ENCODE measurements at regions of chr21 and their contacts with region 1.

Region 1: DNA sequence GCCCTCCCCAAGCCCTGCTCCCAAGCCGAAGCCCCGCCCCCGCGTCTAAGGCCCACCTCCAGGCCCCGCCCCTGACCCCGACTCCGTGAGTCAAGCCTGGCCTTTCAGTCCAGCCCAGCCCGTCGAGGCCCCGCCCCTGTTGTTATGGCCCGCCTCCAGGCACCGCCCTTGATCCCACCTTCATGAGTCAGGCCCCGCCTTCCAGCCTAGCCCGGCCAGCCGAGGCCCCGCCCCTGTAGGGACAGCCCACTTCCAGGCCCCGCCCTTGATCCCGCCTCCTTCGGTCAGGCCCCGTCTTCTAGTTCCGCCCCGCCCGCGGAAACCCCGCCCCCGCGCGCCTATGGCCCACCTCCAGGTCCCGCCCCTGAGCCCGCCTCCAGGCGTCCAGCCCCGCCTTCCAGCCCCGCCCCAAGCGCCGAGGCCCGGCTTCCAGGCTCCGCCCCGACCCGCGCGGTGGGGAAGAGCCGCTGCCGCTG is 247 bp upstream of the DOP1B start:
- DNase-seq: peak; percentile 100
- H3K4me3 Mint-ChIP-seq: peak overlapping the region; percentile 80
- H3K27ac Mint-ChIP-seq: no peak overlapping the region
- H3K4me1 Mint-ChIP-seq: peaks cover 13% of the 10 kb centered on the region
- H3K27me3 Mint-ChIP-seq: no peaks in the 10 kb centered on the region

Region 2: DNA sequence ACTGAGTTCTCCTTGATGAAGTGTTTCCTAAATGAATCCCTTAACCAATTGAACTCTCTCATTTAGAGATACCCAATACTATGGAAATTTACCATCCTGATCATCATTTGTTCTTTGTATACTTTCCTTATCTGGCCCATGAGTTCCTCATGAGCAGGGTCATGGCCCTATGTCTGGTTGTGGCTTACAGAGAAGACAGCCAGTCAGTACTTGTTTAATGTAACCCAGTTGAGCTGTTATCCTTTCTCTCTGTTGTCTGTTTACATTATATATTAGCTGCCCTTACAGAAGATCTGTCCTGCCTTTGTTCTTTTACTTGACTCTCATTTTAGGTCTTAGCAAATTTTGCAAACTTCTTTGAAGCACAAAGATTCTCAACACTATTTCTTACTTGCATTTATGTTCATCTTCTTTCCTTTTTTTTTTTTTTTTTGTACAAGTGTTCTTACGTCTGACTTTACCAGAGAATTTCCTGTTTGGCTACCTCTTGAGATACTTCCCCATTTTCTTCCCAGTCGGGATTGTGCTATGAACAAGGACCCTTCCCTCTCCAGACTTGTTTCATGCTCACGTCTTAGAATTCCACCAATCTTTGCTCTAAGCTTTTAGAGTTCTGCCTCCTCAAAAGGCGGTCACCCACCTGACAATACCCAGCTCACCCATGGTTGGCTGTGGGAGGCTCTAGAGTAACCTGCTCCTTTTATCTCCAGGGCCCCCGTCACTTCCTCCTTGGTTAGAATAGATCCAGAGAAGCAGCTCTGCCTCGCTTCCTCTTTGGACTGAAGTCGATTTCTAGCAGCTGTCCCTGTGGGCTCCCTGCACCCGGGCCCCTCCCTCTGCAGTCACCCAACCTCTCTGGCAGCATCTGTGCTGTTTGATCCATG is 1053.6 kb before region 1 on chr21:
- CTCF ChIA-PET with region 1: no interaction called
- intact Hi-C with region 1: no loop called
- DNase-seq: peak; percentile 70
- H3K4me3 Mint-ChIP-seq: no peak overlapping the region
- H3K27ac Mint-ChIP-seq: no peak overlapping the region
- H3K4me1 Mint-ChIP-seq: peaks cover 4% of the 10 kb centered on the region
- H3K27me3 Mint-ChIP-seq: no peaks in the 10 kb centered on the region

Region 3: GRCh38 chr21:36060159-36060921 is 96.0 kb before region 1 on chr21 and contains the start of gene SETD4:
- CTCF ChIA-PET with region 1: no interaction called
- intact Hi-C with region 1: loop called (anchors 1 kb)
- DNase-seq: peak; percentile 91
- H3K4me3 Mint-ChIP-seq: peak within 1 kb of the TSS; percentile 82
- H3K27ac Mint-ChIP-seq: peak within 1 kb of the TSS; percentile 90
- H3K4me1 Mint-ChIP-seq: peaks cover 16% of the 10 kb centered on the region
- H3K27me3 Mint-ChIP-seq: no peaks in the 10 kb centered on the region
- total RNA-seq, gene SETD4: 14.8 to 15.2 TPM

Region 4: DNA sequence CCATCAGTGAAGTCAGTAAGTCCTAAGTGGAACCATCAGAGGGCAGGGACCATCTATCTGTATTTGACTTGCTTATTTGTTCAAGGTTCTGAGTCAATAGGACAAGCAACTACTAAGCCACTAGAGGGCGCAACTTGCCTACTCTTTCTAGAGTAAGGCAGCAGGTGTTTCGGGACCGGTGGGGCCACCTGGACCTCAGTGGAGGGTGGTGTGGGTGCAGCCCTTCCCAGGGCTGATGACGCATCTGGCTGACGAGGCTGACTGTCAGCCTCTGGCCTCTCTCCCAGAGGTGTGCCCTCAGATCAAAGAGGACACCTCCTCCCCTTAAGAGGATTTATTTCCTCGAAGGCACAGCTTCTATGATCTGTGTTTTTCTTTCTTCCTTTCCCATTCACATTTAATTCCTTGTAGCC is 14.9 kb before region 1 on chr21:
- CTCF ChIA-PET with region 1: interaction called, 7 read pairs
- intact Hi-C with region 1: loop called (anchors 1 kb)
- DNase-seq: peak; percentile 95
- H3K4me3 Mint-ChIP-seq: no peak overlapping the region
- H3K27ac Mint-ChIP-seq: peak overlapping the region; percentile 0
- H3K4me1 Mint-ChIP-seq: peaks cover 20% of the 10 kb centered on the region
- H3K27me3 Mint-ChIP-seq: no peaks in the 10 kb centered on the region

Region 5: DNA sequence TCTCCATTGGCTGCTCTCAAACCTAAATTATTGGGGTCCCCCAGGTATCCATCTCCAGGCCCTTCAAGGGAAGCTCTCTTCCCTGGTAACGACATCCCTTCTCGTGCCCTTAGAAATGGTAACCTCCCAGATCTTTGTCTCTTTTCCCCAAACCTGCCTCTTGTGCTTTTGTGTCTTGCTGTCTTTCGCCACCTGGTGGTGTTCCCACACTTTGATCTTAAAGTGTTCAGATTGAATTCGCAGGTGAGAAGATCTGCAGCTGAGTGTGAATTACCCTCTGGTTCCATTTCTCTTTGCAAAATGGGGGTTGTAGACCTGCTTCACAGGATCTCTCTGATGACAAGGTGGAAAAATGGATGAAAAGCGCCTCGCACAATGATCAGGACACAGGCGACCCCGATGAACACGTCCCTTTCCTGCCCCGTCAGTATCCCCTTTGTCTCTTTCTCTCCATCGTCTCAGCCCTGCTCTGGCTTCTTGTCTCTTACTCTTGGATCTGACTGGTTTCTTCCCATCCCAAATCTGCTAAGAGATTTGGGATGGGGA is 53.3 kb after region 1 on chr21:
- CTCF ChIA-PET with region 1: interaction called, 59 read pairs
- intact Hi-C with region 1: loop called (anchors 1 kb)
- DNase-seq: peak; percentile 71
- H3K4me3 Mint-ChIP-seq: no peak overlapping the region
- H3K27ac Mint-ChIP-seq: no peak overlapping the region
- H3K4me1 Mint-ChIP-seq: peaks cover 12% of the 10 kb centered on the region
- H3K27me3 Mint-ChIP-seq: no peaks in the 10 kb centered on the region

Region 6: GRCh38 chr21:36319765-36320420 is 163.5 kb after region 1 on chr21 and contains the start of gene MORC3:
- CTCF ChIA-PET with region 1: interaction called, 3 read pairs
- intact Hi-C with region 1: loop called (anchors 1 kb)
- DNase-seq: peak; percentile 98
- H3K4me3 Mint-ChIP-seq: peak within 1 kb of the TSS; percentile 94
- H3K27ac Mint-ChIP-seq: peak within 1 kb of the TSS; percentile 96
- H3K4me1 Mint-ChIP-seq: peaks cover 38% of the 10 kb centered on the region
- H3K27me3 Mint-ChIP-seq: no peaks in the 10 kb centered on the region
- total RNA-seq, gene MORC3: 26.7 to 28.6 TPM

Region 7: DNA sequence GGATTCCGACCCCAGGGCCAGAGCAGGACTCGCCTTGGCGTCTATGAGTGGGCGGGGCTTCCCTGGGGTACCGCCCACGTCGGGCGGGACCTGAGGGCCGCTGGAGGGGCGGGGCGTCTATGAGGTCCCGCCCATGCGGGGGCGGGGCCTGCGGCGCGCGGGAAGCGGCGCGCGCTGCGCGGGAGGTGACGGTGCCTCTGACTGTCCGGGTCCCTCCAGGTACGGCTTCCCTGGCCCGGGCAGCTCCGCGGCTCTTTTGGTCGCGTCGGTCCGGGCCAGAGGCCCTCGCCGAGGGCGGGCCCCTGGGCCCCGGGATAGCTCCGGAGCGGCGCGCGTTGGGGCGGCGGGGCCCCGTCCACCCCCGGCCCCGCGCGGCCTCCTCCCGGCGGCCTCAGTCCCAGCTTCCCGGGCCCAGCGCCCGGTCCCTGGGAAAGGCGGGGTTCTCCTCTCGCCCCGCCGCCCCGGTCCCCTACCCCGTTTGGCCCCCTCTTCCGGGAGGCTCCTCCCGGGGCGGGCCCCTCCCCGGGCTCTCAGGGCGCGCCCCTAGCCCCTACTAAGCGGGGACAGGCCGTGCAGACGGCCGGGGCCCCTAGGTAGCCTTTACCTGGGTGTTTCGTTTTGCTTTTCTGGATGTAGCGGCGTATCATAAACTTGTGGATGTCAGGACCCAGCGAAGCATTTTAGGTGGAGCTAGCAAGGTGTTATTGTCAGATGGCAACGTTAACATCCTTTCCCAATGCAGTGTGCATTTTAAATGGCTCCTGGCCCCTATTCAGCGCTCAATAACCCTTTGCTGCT is 229.1 kb after region 1 on chr21 and contains the start of gene CHAF1B:
- CTCF ChIA-PET with region 1: interaction called, 4 read pairs
- intact Hi-C with region 1: loop called (anchors 1 kb)
- DNase-seq: peak; percentile 82
- H3K4me3 Mint-ChIP-seq: peak within 1 kb of the TSS; percentile 80
- H3K27ac Mint-ChIP-seq: peak within 1 kb of the TSS; percentile 46
- H3K4me1 Mint-ChIP-seq: peaks cover 20% of the 10 kb centered on the region
- H3K27me3 Mint-ChIP-seq: no peaks in the 10 kb centered on the region
- total RNA-seq, gene CHAF1B: 30.5 to 31.9 TPM

Region 8: DNA sequence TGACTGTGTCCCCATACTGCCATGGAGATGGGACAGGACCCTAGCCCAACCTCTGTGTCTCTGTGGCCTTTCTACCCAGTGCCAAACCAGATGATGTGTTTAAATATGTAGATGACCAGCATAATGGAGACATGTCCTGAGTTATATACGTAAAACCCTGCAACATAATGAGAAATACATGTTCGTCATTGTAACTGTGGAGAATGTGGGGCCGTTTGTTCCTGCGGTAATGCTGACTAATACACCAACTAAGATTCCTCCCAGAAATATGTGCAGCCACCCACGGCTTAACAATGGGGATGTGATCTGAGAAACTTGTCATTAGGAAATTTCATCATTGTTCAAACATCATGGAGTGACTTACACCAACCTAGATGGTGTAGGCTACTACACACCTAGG is 470.9 kb after region 1 on chr21:
- CTCF ChIA-PET with region 1: no interaction called
- intact Hi-C with region 1: no loop called
- DNase-seq: no peak
- H3K4me3 Mint-ChIP-seq: no peak overlapping the region
- H3K27ac Mint-ChIP-seq: no peak overlapping the region
- H3K4me1 Mint-ChIP-seq: no peaks in the 10 kb centered on the region
- H3K27me3 Mint-ChIP-seq: no peaks in the 10 kb centered on the region